Activated T-helper 2 cell treated with anti-CD3 and anti-CD28 coated beads, Interferon-gamma antibody, Interleukin-2, Interleukin-4, amounts not matched to agents 10 μg/mL and 5 μg/mL and 100 μg/mL, durations not matched to agents 14 hours and 24 hours and 36 hours (primary cell): ENCODE measurements at regions of chr14 and their contacts with region 1.

Region 1: GRCh38 chr14:77862154-77862786 is 62.4 kb downstream of the ADCK1 start:
- DNase-seq: peak; percentile 53
- H3K4me3 Mint-ChIP-seq: no peak overlapping the region
- H3K27ac Mint-ChIP-seq: no peak overlapping the region
- H3K4me1 Mint-ChIP-seq: no peaks in the 10 kb centered on the region
- H3K27me3 Mint-ChIP-seq: no peaks in the 10 kb centered on the region

Region 2: DNA sequence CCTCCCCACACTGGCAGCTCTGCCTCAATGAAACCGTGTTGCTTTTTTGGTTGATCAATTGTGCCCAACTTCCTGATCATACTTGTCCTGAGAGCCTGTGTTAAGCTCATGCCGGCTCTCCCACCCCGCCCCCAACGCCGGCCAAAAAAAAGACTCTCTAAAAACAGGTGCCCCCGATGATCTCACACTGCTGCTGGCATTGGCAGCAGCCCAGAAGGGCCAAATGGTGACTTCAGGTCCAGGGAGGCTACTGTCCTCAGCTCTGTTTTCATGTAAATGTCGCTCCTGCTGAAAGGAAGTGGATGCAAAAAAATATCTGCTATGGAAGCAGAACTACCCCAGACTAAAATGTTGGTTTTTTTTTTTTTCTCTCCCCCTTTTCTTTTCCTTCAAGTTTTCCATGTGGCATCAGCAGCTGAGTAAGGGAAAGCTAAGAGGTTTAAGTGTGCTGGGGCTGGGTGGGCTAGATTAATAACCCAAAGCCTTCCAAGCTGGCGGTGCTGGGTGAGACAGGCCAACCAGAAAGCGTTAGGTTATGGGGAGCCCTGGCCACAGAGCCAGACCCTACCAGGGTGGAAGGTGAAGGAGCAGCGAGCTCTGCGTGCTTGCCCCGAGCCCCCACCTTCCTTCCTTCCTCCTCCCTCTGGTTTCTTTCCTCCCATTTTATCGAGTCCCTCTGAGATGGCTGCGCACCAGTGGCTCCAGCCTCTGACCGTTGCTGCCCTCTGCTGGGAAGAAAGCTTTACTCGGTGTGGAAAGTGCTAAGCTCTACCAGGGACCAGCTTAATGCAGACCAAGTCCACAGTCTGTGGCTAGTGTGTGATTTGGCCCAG is 704.0 kb after region 1 on chr14:
- intact Hi-C with region 1: loop called (anchors 2 kb)
- DNase-seq: peak; percentile 22
- H3K4me3 Mint-ChIP-seq: no peak overlapping the region
- H3K27ac Mint-ChIP-seq: no peak overlapping the region
- H3K4me1 Mint-ChIP-seq: peaks cover 2% of the 10 kb centered on the region
- H3K27me3 Mint-ChIP-seq: no peaks in the 10 kb centered on the region

Region 3: DNA sequence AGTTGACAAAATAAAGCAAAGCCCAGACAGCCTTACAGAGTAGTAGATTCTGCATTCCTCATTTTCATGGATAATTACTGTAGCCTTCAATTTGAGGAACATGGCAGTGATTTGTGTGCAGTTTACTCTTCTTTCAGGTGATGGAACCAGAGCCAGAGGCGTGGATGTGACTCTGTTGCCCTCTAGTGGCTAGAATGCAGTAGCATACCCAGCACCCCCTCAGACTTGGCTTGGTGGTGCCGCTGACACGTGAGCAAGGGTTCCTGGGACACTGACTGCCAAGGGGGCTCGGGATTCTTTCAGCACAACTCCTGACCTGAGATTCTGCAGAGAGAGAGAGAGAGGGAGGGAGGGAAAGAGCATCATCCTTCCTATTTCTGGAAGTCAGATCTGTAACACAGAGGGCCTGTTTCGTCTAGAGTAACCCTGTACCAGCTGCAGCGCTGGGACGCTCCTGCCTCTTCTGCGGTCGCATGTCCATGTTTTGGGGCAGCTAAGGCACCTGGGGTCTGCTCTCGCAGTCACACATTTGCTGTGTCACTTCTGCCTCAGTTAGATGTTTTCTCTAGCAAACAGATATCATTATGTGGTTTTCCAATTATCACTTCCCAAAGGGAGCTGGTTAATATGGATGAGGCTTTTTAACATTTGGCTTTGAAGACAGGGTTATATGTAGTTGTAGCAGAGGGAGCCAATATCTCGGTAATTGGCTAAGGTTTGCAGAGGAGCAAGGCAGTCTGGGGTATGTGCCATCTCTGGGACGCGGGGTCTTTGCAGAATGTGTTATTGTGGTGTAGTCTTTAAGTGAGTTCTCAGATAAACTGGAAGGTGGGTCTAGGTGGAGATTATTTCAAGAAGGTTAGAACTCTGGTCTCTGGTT is 736.0 kb after region 1 on chr14:
- intact Hi-C with region 1: loop called (anchors 1 kb)
- DNase-seq: peak; percentile 16
- H3K4me3 Mint-ChIP-seq: no peak overlapping the region
- H3K27ac Mint-ChIP-seq: no peak overlapping the region
- H3K4me1 Mint-ChIP-seq: no peaks in the 10 kb centered on the region
- H3K27me3 Mint-ChIP-seq: no peaks in the 10 kb centered on the region